MCF 10A (cell line): ENCODE measurements at regions of chr1 and their contacts with region 1.

Region 1: GRCh38 chr1:6602669-6603237 is at the start of gene KLHL21:
- DNase-seq: peak; percentile 82
- H3K4me3 Mint-ChIP-seq: peak within 1 kb of the TSS; percentile 99
- H3K27ac Mint-ChIP-seq: peak within 1 kb of the TSS; percentile 99
- H3K4me1 Mint-ChIP-seq: peaks cover 17% of the 10 kb centered on the region
- H3K27me3 Mint-ChIP-seq: no peaks in the 10 kb centered on the region
- CTCF ChIP-seq: no peak
- total RNA-seq, gene KLHL21: 14.0 and 19.5 TPM in 2 replicates

Region 2: GRCh38 chr1:6579374-6580118 is 23.2 kb before region 1 on chr1 and contains the start of gene ZBTB48:
- CTCF ChIA-PET with region 1: interaction called, 4 read pairs
- POLR2A ChIA-PET with region 1: interaction called, 103 read pairs
- intact Hi-C with region 1: loop called (anchors 1 kb)
- DNase-seq: peak; percentile 99
- H3K4me3 Mint-ChIP-seq: peak within 1 kb of the TSS; percentile 94
- H3K27ac Mint-ChIP-seq: peak within 1 kb of the TSS; percentile 100
- H3K4me1 Mint-ChIP-seq: peaks cover 27% of the 10 kb centered on the region
- H3K27me3 Mint-ChIP-seq: no peaks in the 10 kb centered on the region
- CTCF ChIP-seq: no peak
- total RNA-seq, gene ZBTB48: 40.6 TPM in 2 replicates

Region 3: GRCh38 chr1:6587261-6588005 is 15.3 kb before region 1 on chr1:
- CTCF ChIA-PET with region 1: interaction called, 3 read pairs
- POLR2A ChIA-PET with region 1: interaction called, 69 read pairs
- intact Hi-C with region 1: no loop called
- DNase-seq: peak; percentile 38
- H3K4me3 Mint-ChIP-seq: peak overlapping the region; percentile 23
- H3K27ac Mint-ChIP-seq: peak overlapping the region; percentile 66
- H3K4me1 Mint-ChIP-seq: peaks cover 19% of the 10 kb centered on the region
- H3K27me3 Mint-ChIP-seq: no peaks in the 10 kb centered on the region
- CTCF ChIP-seq: no peak

Region 4: DNA sequence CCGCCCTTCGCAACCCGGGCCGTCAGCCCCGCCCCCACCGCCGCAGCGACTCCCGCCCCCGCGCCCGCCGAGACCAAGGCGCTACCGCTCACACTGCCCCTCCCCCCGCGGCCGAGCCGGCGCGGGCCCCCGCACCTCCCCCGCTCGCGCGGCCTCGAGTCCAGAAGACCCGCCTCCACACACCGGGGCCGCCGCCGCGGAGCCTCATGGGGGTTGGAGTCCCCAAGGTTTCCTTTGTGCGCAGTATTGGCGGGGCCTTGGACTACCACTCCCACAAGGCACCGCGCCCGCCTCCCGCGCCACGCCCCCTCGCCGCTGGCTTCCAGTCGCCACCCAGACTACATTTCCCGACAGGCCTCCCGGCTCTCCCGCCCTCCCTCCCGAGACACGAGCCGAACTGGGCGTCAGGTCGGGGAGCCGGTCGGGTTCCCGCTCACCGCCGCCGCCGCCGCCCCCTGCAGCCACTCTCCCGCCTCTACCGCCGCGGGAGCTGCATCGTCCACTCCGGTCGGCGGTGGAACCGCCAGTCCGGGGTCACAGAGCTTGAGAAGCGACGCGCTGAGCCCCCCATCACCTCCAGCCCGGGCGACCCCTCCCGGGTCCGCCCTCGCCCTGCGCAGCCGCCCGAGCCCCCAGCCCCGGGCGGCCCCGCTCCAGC is 10.7 kb after region 1 on chr1 and contains the start of gene PHF13:
- CTCF ChIA-PET with region 1: interaction called, 10 read pairs
- POLR2A ChIA-PET with region 1: interaction called, 98 read pairs
- intact Hi-C with region 1: loop called (anchors 1 kb)
- DNase-seq: peak; percentile 99
- H3K4me3 Mint-ChIP-seq: peak within 1 kb of the TSS; percentile 86
- H3K27ac Mint-ChIP-seq: peak within 1 kb of the TSS; percentile 60
- H3K4me1 Mint-ChIP-seq: peaks cover 6% of the 10 kb centered on the region
- H3K27me3 Mint-ChIP-seq: no peaks in the 10 kb centered on the region
- CTCF ChIP-seq: no peak
- total RNA-seq, gene PHF13: 10.3 and 12.7 TPM in 2 replicates